ENCODE measurements at regions of chr6 and their contacts with region 1.

Region 1: GRCh38 chr6:15945227-15946159 is 183.4 kb upstream of the MYLIP start:
- DNase-seq: no peak
- H3K4me3 ChIP-seq: no peak overlapping the region
- H3K27ac ChIP-seq: no peak overlapping the region
- H3K4me1 ChIP-seq: no peaks in the 10 kb centered on the region
- H3K27me3 ChIP-seq: peaks cover 79% of the 10 kb centered on the region
- CTCF ChIP-seq: no peak

Region 2: DNA sequence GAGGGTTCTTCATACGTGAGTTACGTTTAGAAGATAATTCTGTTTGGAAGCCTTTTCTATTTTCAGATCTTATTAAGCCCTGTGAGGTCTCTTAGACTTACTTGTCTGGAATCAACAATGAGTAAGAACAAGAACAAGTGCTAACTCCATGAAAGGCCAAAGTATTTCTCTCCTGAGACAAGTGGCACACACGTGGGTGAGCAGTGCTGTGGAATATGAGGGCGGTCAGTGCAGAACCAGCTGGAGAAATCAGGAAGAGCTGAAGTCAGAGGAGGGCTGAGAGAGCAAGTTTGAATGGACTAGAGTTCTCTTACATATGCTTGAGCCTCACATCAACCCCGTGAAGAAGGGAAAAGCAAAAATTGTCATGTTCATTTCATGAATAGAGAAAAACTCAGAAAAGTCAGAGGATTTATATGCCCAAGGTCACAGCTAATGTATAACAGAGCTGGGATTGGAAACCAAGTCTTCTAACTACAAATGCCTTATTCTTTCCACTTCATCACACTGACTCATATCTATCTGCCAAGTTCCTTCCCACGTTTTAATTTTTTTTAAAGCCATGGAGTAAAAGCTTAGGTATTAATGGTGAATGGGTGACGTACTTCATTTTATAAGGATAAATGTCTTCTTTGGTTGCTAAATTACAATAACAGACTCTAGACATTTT is 81.3 kb before region 1 on chr6:
- CTCF ChIA-PET with region 1: no interaction called
- POLR2A ChIA-PET with region 1: interaction called, 13 read pairs
- intact Hi-C with region 1: no loop called
- DNase-seq: no peak
- H3K4me3 ChIP-seq: no peak overlapping the region
- H3K27ac ChIP-seq: no peak overlapping the region
- H3K4me1 ChIP-seq: no peaks in the 10 kb centered on the region
- H3K27me3 ChIP-seq: peaks cover 19% of the 10 kb centered on the region
- CTCF ChIP-seq: no peak

Region 3: GRCh38 chr6:15929685-15930084 is 15.8 kb before region 1 on chr6:
- CTCF ChIA-PET with region 1: no interaction called
- POLR2A ChIA-PET with region 1: no interaction called
- intact Hi-C with region 1: no loop called
- DNase-seq: no peak
- H3K4me3 ChIP-seq: no peak overlapping the region
- H3K27ac ChIP-seq: no peak overlapping the region
- H3K4me1 ChIP-seq: no peaks in the 10 kb centered on the region
- H3K27me3 ChIP-seq: peaks cover 38% of the 10 kb centered on the region
- CTCF ChIP-seq: no peak

Measured in PC-9 (cell line).